ENCODE measurements at regions of chr17 and their contacts with region 1.

Region 1: GRCh38 chr17:77666881-77667395 is 291.6 kb upstream of the TNRC6C start:
- DNase-seq: peak; percentile 83 to 89 (median 84)
- H3K4me3 ChIP-seq: peak overlapping the region; percentile 49 to 53
- H3K4me3 Mint-ChIP-seq: peak overlapping the region; percentile 81 to 98 (median 90)
- H3K27ac ChIP-seq: peak overlapping the region; percentile 54
- H3K27ac Mint-ChIP-seq: peak overlapping the region; percentile 82 to 98 (median 97)
- H3K4me1 ChIP-seq: peaks cover 35% of the 10 kb centered on the region
- H3K4me1 Mint-ChIP-seq: peaks cover 44 to 64% (median 50%) of the 10 kb centered on the region in 4 donors
- H3K27me3 ChIP-seq: no peaks in the 10 kb centered on the region
- H3K27me3 Mint-ChIP-seq: no peaks in the 10 kb centered on the region

Region 2: DNA sequence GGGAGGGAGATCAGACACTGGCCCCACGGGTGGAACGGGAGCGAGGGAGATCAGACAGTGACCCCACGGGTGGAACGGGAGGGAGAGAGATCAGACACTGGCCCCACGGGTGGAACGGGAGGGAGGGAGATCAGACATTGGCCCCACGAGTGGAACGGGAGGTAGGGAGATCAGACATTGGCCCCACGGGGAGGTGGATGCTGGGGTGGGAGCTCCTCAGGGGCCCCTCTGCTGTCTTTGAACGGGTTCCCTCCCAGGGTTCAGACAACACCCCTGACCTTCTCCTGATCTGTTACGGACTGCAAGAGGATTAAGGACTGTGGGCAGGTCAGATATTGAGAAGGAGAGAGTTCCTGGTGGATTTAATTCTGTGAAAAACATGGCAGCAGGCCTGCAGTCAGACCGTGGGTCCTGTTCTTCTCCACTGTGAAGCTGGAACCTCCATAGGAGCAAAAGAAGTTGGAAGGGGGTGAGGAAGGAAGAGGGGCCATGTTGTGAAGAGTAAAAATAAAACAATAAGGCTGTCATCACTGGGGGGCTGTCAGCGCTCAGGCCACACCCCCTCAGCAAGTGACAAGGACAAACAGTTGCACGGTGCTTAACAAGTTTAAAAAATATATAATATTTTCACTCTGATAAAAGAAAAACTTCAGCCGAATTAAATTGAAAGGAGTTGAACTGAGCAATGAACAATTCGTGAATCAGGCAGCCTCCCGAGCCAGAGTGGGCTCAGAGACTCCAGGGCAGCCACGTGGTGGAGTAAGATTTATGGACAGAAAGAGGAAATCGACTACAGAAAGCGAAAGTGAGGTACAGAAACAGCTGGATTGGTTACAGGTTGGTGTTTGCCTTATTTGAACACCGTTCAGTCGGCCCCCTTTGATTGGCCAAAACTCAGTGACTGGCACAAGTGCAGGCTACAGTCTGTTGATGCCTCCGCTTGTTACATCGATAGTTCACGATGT is 57.1 kb before region 1 on chr17:
- CTCF ChIA-PET with region 1: interaction called, 3 read pairs
- POLR2A ChIA-PET with region 1: interaction called, 15 read pairs
- intact Hi-C with region 1: loop called (anchors 1 kb)
- DNase-seq: peak; percentile 63 to 77 (median 74)
- H3K4me3 ChIP-seq: peak overlapping the region; percentile 14 to 39
- H3K4me3 Mint-ChIP-seq: peak overlapping the region; percentile 84 to 94 (median 89)
- H3K27ac ChIP-seq: peak overlapping the region; percentile 3
- H3K27ac Mint-ChIP-seq: peak overlapping the region; percentile 79 to 96 (median 92)
- H3K4me1 ChIP-seq: peaks cover 20% of the 10 kb centered on the region
- H3K4me1 Mint-ChIP-seq: peaks cover 17 to 33% (median 23%) of the 10 kb centered on the region in 4 donors
- H3K27me3 ChIP-seq: no peaks in the 10 kb centered on the region
- H3K27me3 Mint-ChIP-seq: no peaks in the 10 kb centered on the region

Region 3: GRCh38 chr17:77690271-77691161 is 23.6 kb after region 1 on chr17:
- CTCF ChIA-PET with region 1: interaction called, 4 read pairs
- POLR2A ChIA-PET with region 1: interaction called, 14 read pairs
- intact Hi-C with region 1: loop called (anchors 1 kb)
- DNase-seq: peak in 3 of 5 donors; percentile 16 to 18 (median 18)
- H3K4me3 ChIP-seq: peak overlapping the region in 1 of 2 donors; percentile 24
- H3K4me3 Mint-ChIP-seq: peak overlapping the region; percentile 48 to 78 (median 68)
- H3K27ac ChIP-seq: no peak overlapping the region
- H3K27ac Mint-ChIP-seq: peak overlapping the region in 3 of 7 donors; percentile 12 to 59 (median 29)
- H3K4me1 ChIP-seq: peaks cover 30% of the 10 kb centered on the region
- H3K4me1 Mint-ChIP-seq: peaks cover 20 to 47% (median 35%) of the 10 kb centered on the region in 4 donors
- H3K27me3 ChIP-seq: no peaks in the 10 kb centered on the region
- H3K27me3 Mint-ChIP-seq: peaks cover 7 to 9% of the 10 kb centered on the region in 2 donors